ENCODE measurements at regions of chr2 and their contacts with region 1.

Region 1: DNA sequence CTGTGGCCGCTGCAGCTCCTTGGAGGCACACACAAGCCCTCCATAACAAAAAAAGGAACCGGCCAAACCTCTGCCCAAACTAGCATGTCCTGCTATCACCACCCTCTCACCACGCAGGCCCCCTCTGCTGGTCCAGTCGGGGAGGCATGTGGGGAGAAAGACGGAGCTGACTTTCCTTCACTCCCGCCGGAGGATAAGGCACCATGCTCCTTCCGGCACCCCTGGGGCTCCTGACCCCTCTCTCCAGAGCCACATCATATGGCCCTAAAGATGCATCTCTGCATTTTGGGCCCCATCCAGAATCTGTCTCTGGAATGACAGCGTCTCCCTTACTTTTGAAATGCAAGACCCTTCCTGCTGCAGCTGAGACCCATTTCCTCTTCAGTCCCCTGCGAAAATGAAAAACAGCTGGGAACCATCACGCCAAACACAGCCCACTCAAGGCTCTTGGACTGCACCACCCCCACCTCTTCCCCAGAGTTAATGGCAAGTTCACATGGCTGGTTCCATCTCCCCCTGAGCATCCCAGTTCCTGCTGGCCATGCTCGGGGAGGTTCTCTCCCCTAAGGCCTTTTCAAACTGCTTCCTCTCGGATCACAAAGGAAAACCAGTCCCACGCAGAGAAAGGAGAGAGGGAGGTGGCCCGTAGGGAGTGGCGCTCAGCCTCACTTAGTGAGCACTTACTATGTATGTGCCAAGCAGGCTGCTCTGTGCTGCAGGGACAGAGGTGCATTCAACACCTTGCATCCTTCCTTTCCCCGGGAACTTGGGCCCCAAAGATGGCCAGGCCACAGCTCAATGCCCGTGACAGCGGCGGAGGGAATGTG is 35.2 kb upstream of the MLPH start:
- DNase-seq: peak in 1 of 2 experiments; percentile 70
- H3K4me3 ChIP-seq: no peak overlapping the region
- H3K27ac ChIP-seq: no peak overlapping the region
- H3K4me1 ChIP-seq: peaks cover 0 to 6% (median 4%) of the 10 kb centered on the region in 4 experiments; a peak in 4 of 7 replicates
- H3K27me3 ChIP-seq: peaks cover 0 to 2% (median 0%) of the 10 kb centered on the region in 4 experiments; a peak in 1 of 7 replicates
- CTCF ChIP-seq: peak; percentile 62 to 71 (median 63)
- EP300 ChIP-seq: no peak
- POLR2A ChIP-seq: no peak
- RAD21 ChIP-seq: peak; percentile 54 to 60

Region 2: DNA sequence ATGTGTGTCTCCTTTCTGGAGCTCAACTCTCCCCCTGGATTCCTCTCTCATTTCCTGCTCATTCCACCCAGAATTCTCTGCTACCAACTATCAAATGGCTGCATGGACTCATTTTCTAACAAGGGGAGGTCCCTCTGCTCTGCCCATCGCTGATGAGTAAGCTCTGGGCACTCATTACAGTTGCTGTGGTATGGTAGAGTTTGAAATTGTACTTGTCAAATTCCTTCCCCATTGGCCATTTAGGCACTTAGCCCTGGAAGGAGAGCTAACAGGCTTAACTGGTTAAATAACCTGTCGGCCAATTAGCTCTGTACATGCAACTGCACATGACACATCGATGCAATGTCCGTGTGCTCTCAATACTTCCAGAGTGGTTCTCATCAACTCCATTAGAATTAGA is 58.3 kb before region 1 on chr2:
- CTCF ChIA-PET with region 1: no interaction called
- POLR2A ChIA-PET with region 1: no interaction called
- DNase-seq: no peak
- H3K4me3 ChIP-seq: no peak overlapping the region
- H3K27ac ChIP-seq: no peak overlapping the region
- H3K4me1 ChIP-seq: no peaks in the 10 kb centered on the region
- H3K27me3 ChIP-seq: no peaks in the 10 kb centered on the region
- CTCF ChIP-seq: no peak
- EP300 ChIP-seq: no peak
- POLR2A ChIP-seq: no peak
- RAD21 ChIP-seq: no peak

Region 3: DNA sequence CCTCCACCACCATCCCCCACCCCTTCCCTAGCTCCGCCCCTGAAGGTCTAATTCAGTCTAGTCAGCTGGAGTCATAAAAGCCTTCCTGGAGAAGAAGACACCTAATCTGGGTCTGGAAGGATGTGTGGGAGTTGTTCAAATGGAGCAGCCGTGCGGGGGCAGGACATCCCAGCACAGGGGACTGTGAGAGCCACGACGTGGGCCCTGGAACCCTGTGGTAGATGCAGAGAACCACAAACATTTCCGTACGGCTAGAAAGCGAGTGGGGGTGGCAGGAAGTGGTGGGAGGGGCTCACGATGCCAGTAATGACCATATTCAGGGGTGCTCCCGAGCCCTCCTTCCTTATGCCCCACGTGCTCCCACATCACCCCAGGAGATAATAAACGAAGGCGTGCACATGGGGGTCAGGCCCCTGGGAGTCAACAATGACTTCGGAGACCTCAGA is 17.0 kb before region 1 on chr2:
- CTCF ChIA-PET with region 1: interaction called, 11 read pairs
- POLR2A ChIA-PET with region 1: no interaction called
- DNase-seq: no peak
- H3K4me3 ChIP-seq: no peak overlapping the region
- H3K27ac ChIP-seq: no peak overlapping the region
- H3K4me1 ChIP-seq: peaks cover 0 to 17% (median 9%) of the 10 kb centered on the region in 4 experiments; a peak in 6 of 7 replicates
- H3K27me3 ChIP-seq: no peaks in the 10 kb centered on the region; a peak in 1 of 7 replicates
- CTCF ChIP-seq: no peak
- EP300 ChIP-seq: no peak
- POLR2A ChIP-seq: no peak
- RAD21 ChIP-seq: no peak

Region 4: DNA sequence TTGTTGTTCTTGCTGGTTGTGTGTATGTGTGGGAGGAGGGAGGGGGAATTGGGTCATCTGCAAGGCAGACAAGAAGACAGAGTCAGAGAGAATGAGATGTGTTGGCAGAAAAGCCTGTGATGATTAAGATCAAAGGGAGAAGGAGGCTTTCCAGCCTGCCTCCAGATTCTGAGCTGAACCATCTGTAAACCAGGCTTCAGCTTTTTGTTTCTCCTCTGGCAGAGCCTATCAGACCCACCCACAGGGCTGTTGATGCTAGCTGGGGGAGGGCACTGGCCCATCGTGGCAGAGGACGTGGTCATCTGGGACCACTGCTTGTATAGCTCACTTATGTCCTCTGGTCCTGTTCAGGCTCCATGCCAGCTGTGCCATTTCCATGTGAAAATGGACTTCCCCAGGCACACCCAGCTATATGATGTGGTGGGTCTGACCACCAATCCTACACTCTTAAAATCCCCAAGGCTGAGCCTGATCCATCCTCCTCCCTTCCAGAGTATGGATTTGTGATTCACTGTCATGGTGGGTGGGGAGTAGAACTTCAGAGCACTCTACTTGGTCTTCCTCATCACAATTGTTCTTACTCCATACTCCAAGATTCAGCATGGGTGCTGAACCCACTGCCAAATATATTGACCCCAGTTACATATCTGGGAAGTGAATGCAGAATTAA is 10.1 kb before region 1 on chr2:
- CTCF ChIA-PET with region 1: interaction called, 19 read pairs
- POLR2A ChIA-PET with region 1: no interaction called
- DNase-seq: no peak
- H3K4me3 ChIP-seq: no peak overlapping the region
- H3K27ac ChIP-seq: no peak overlapping the region
- H3K4me1 ChIP-seq: peaks cover 0 to 11% (median 6%) of the 10 kb centered on the region in 4 experiments; a peak in 6 of 7 replicates
- H3K27me3 ChIP-seq: no peaks in the 10 kb centered on the region
- CTCF ChIP-seq: no peak
- EP300 ChIP-seq: no peak
- POLR2A ChIP-seq: no peak
- RAD21 ChIP-seq: no peak

Region 5: DNA sequence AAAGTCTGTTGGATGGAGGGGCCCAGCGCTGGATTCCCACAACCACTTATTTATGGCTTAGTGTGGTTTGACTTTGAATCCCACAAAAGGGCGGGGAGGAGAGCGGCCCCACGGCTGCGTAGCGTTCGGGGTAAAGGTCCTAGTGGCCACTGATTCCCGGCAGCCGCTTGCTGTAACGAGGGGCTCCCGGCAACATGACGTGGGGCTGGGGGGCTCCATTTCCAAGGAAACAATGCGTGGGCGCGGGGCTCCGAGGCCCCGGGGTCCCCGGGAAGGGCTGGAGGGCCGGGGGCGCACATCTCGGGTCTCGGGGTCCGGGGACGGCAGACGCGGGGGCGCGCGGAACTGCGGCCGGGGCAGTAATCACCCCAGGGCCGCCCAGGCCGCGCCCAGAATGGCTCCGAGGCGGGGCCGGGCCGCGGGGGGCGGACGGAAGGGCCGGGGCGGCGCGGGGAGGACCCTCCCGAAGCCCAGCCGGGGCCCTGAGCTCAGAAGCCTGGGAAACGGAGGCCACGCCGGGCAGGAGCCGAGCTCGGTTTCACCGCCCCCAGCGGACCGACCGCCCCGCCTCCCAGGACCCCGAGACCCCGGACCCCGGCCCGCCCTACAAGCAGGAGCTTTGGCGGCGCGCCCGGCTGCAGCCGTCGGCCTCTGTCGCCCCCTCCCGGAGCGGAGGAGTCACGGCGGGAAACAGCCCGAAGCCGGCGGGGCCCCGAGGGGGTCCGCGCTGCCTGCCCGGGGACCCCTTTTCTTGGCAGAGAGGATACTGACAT is 23.3 kb after region 1 on chr2:
- CTCF ChIA-PET with region 1: interaction called, 27 read pairs
- POLR2A ChIA-PET with region 1: interaction called, 3 read pairs
- DNase-seq: peak in 1 of 2 experiments; percentile 97
- H3K4me3 ChIP-seq: peak overlapping the region; percentile 53 to 96 (median 64)
- H3K27ac ChIP-seq: peak overlapping the region; percentile 61; the same call in 1 of the 2 replicates
- H3K4me1 ChIP-seq: peaks cover 0 to 13% (median 7%) of the 10 kb centered on the region in 4 experiments; a peak in 4 of 7 replicates
- H3K27me3 ChIP-seq: peaks cover 0 to 7% (median 7%) of the 10 kb centered on the region in 4 experiments; a peak in 3 of 7 replicates
- CTCF ChIP-seq: peak; percentile 63 to 90 (median 77)
- EP300 ChIP-seq: no peak
- POLR2A ChIP-seq: peak in 1 of 2 experiments; percentile 59; a peak in 1 of 3 replicates
- RAD21 ChIP-seq: peak; percentile 46 to 70; a peak in 3 of 4 replicates

Region 6: DNA sequence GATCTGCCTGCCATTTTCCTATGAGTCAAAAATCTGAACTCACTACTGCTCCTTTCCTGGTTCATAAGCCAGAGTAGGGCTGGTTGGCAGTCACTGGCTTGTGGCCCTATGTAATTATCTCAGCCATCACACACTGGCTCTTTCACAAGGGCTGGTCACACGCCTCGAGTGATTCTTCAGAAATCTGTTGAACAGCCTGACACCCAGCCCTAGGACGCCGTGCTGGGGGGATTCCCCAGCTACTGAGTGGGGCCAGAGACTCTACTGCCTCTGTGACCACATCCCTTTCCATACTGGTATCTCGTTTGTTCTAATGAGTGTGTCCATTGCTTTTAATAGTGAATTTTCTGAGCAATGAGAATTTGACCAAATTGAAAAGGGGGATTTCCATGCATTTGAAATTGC is 300.9 kb after region 1 on chr2:
- CTCF ChIA-PET with region 1: no interaction called
- POLR2A ChIA-PET with region 1: no interaction called
- DNase-seq: no peak
- H3K4me3 ChIP-seq: no peak overlapping the region
- H3K27ac ChIP-seq: no peak overlapping the region
- H3K4me1 ChIP-seq: no peaks in the 10 kb centered on the region
- H3K27me3 ChIP-seq: no peaks in the 10 kb centered on the region
- CTCF ChIP-seq: no peak
- EP300 ChIP-seq: no peak
- POLR2A ChIP-seq: no peak
- RAD21 ChIP-seq: no peak